Testis (tissue), 5 donors: ENCODE measurements at regions of chr9 and their contacts with region 1.

Region 1: DNA sequence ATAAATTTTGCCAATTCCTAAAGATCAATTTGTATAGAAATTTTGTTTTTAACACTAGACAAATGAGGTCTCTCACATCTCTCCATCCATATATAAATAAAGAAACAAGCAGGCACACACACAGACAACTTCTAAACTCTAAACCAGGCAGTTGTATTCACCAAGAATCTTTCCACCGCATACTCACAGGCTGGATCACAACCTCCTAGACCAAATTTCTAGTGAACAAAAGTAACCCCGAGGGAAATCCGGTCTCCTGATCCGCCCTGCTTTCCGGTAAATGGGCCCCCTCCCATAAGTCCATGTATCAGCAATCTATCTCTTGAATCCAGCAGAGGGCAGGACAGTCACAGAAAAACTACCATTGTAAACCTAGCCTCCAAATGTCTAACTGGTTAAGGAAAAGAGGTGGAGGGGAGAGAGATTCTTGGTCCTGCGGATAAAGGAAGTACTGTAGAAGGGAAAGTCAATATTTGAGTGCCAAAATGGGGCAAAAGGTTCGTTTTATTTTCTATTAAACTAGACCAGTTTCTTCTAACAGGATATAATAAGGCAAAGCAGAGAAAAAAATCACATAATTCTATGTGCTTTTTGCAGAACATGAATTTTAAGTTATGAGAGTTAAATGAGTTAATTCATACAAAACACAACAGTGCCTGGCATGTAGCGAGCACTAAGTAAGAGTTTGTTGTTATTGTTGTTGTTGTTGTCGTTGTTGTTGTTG is 4.8 kb upstream of the SMU1 start:
- DNase-seq: peak; percentile 77
- H3K4me3 ChIP-seq: no peak overlapping the region
- H3K27ac ChIP-seq: peak overlapping the region; percentile 3 to 11
- H3K4me1 ChIP-seq: no peaks in the 10 kb centered on the region
- H3K27me3 ChIP-seq: no peaks in the 10 kb centered on the region
- CTCF ChIP-seq: peak; percentile 51 to 89 (median 85)
- POLR2A ChIP-seq: no peak

Region 2: GRCh38 chr9:33167046-33167808 is 85.9 kb after region 1 on chr9 and contains the start of gene B4GALT1:
- intact Hi-C with region 1: loop called (anchors 10 kb)
- DNase-seq: peak; percentile 96
- H3K4me3 ChIP-seq: peak within 1 kb of the TSS; percentile 89 to 97
- H3K27ac ChIP-seq: peak within 1 kb of the TSS; percentile 98 to 99
- H3K4me1 ChIP-seq: peaks cover 58% of the 10 kb centered on the region
- H3K27me3 ChIP-seq: no peaks in the 10 kb centered on the region
- CTCF ChIP-seq: no peak
- POLR2A ChIP-seq: peak; percentile 41
- total RNA-seq, gene B4GALT1: 192 to 212 TPM

Region 3: GRCh38 chr9:33225319-33226149 is 144.2 kb after region 1 on chr9:
- intact Hi-C with region 1: loop called (anchors 5 kb)
- DNase-seq: peak; percentile 80
- H3K4me3 ChIP-seq: no peak overlapping the region
- H3K27ac ChIP-seq: no peak overlapping the region
- H3K4me1 ChIP-seq: peaks cover 7% of the 10 kb centered on the region
- H3K27me3 ChIP-seq: no peaks in the 10 kb centered on the region
- CTCF ChIP-seq: peak; percentile 82 to 94 (median 93)
- POLR2A ChIP-seq: no peak